ENCODE measurements at regions of chr1 and their contacts with region 1.

Region 1: GRCh38 chr1:225428068-225428880 is 436 bp upstream of the LBR start:
- DNase-seq: peak; percentile 92 to 94
- H3K4me3 ChIP-seq: peak overlapping the region; percentile 82
- H3K4me3 Mint-ChIP-seq: peak overlapping the region; percentile 74
- H3K27ac Mint-ChIP-seq: peak overlapping the region; percentile 80
- H3K4me1 ChIP-seq: peaks cover 23% of the 10 kb centered on the region
- H3K4me1 Mint-ChIP-seq: peaks cover 24% of the 10 kb centered on the region
- H3K27me3 ChIP-seq: no peaks in the 10 kb centered on the region
- H3K27me3 Mint-ChIP-seq: no peaks in the 10 kb centered on the region
- CTCF ChIP-seq: no peak

Region 2: GRCh38 chr1:225441314-225442122 is 13.2 kb after region 1 on chr1:
- CTCF ChIA-PET with region 1: interaction called, 5 read pairs
- POLR2A ChIA-PET with region 1: interaction called, 8 read pairs
- intact Hi-C with region 1: loop called (anchors 1 kb)
- DNase-seq: peak; percentile 57 to 65
- H3K4me3 ChIP-seq: no peak overlapping the region
- H3K4me3 Mint-ChIP-seq: no peak overlapping the region
- H3K27ac Mint-ChIP-seq: peak overlapping the region; percentile 77
- H3K4me1 ChIP-seq: peaks cover 37% of the 10 kb centered on the region
- H3K4me1 Mint-ChIP-seq: peaks cover 29% of the 10 kb centered on the region
- H3K27me3 ChIP-seq: no peaks in the 10 kb centered on the region
- H3K27me3 Mint-ChIP-seq: no peaks in the 10 kb centered on the region
- CTCF ChIP-seq: peak; percentile 10 to 57

Region 3: DNA sequence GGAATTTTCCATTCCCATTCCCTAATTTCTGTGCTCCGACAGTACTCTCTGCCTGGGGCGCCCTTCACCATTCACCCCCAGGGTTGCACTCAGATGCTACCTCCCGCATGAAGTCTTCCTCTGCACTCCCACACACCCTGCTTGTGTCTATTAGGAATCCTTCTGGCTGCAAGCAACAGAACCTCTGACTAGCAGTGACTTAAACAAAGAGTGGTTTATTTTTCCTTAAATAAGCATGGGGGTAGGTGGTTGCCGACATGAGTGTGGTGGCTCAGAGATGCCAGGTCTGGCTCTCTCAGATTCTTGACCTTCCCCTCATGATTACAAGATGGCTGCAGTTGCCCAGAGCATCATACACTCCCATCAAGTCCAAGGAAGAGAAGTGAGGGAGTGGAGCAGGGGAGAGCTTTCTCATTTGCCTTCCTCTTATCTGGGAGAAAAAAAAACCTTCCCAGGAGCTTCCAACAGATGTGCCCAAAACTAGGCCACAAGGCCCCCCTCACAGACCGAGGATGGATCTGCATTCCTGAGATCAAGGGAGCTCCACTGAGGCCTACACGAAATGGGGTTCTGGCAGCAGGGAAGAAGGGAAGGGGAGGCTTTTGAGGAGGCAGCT is 49.1 kb after region 1 on chr1:
- CTCF ChIA-PET with region 1: no interaction called
- POLR2A ChIA-PET with region 1: no interaction called
- intact Hi-C with region 1: no loop called
- DNase-seq: no peak
- H3K4me3 ChIP-seq: no peak overlapping the region
- H3K4me3 Mint-ChIP-seq: no peak overlapping the region
- H3K27ac Mint-ChIP-seq: no peak overlapping the region
- H3K4me1 ChIP-seq: peaks cover 11% of the 10 kb centered on the region
- H3K4me1 Mint-ChIP-seq: peaks cover 8% of the 10 kb centered on the region
- H3K27me3 ChIP-seq: no peaks in the 10 kb centered on the region
- H3K27me3 Mint-ChIP-seq: no peaks in the 10 kb centered on the region
- CTCF ChIP-seq: no peak